ENCODE measurements at regions of chr15 and their contacts with region 1.

Region 1: DNA sequence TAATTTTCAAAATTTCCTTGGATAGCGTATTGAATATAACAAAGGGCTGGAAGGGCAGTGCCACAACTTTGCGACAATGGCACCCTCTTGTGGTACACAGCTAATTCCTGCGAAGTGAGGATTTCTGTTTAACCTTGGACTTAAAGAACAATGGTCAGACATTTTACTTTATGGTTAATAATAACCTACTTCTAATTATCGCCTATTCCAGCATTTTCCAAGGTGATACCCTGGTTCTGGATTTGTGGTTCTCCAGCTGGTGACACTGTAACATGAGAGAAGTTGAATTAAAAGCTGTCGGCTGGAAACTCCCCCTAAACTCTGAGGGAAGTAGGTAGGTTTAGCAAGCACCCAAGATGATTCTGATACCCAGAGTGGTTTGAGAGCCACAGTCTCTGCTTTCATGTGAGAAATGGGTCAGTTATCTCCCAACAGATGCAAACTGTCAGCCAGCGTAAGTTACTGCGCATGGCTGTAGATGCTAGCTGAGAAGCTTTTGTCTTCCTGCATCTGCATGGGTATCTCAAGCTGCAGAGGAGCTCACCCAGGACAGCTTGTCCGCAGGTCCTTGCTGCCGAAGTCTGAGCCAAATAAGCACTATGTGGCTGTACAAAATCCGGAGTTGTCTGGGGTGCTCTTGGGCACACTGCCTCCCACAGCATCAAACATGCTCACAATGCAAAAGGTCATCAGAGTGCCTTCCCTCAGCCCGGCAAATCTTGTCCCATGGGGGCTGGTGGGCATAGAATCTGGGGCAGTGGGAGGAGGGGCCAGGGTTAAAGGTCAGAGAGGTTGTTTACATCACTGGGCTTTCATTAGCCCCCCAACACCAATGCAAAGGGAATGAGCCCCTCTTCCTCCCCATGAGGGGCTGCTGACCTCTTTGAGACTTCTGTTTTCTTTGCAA is 6.6 kb upstream of the CHSY1 start:
- DNase-seq: peak; percentile 45
- ATAC-seq: peak; percentile 62
- H3K4me3 Mint-ChIP-seq: no peak overlapping the region
- H3K27ac Mint-ChIP-seq: no peak overlapping the region
- H3K4me1 Mint-ChIP-seq: peaks cover 38% of the 10 kb centered on the region
- H3K27me3 Mint-ChIP-seq: no peaks in the 10 kb centered on the region
- CTCF ChIP-seq: peak; percentile 48

Region 2: GRCh38 chr15:101014921-101015841 is 243.3 kb before region 1 on chr15:
- CTCF ChIA-PET with region 1: interaction called, 128 read pairs
- POLR2A ChIA-PET with region 1: no interaction called
- DNase-seq: peak; percentile 87
- ATAC-seq: peak; percentile 81
- H3K4me3 Mint-ChIP-seq: no peak overlapping the region
- H3K27ac Mint-ChIP-seq: no peak overlapping the region
- H3K4me1 Mint-ChIP-seq: peaks cover 53% of the 10 kb centered on the region
- H3K27me3 Mint-ChIP-seq: no peaks in the 10 kb centered on the region; the same call in 1 of the 2 replicates
- CTCF ChIP-seq: peak; percentile 89

Region 3: GRCh38 chr15:101088788-101089583 is 169.5 kb before region 1 on chr15:
- CTCF ChIA-PET with region 1: interaction called, 20 read pairs
- POLR2A ChIA-PET with region 1: no interaction called
- DNase-seq: peak; percentile 80
- ATAC-seq: peak; percentile 89
- H3K4me3 Mint-ChIP-seq: no peak overlapping the region
- H3K27ac Mint-ChIP-seq: no peak overlapping the region
- H3K4me1 Mint-ChIP-seq: peaks cover 18% of the 10 kb centered on the region; the same call in 1 of the 2 replicates
- H3K27me3 Mint-ChIP-seq: no peaks in the 10 kb centered on the region
- CTCF ChIP-seq: peak; percentile 100

Region 4: GRCh38 chr15:101152914-101153313 is 105.6 kb before region 1 on chr15:
- CTCF ChIA-PET with region 1: interaction called, 11 read pairs
- POLR2A ChIA-PET with region 1: no interaction called
- DNase-seq: peak; percentile 62
- ATAC-seq: peak; percentile 92
- H3K4me3 Mint-ChIP-seq: no peak overlapping the region
- H3K27ac Mint-ChIP-seq: no peak overlapping the region
- H3K4me1 Mint-ChIP-seq: peaks cover 36% of the 10 kb centered on the region
- H3K27me3 Mint-ChIP-seq: no peaks in the 10 kb centered on the region
- CTCF ChIP-seq: peak; percentile 66

Region 5: GRCh38 chr15:101228313-101228712 is 30.2 kb before region 1 on chr15:
- CTCF ChIA-PET with region 1: no interaction called
- POLR2A ChIA-PET with region 1: no interaction called
- DNase-seq: no peak
- ATAC-seq: no peak
- H3K4me3 Mint-ChIP-seq: no peak overlapping the region
- H3K27ac Mint-ChIP-seq: peak overlapping the region; percentile 4; the same call in 1 of the 2 replicates
- H3K4me1 Mint-ChIP-seq: peaks cover 33% of the 10 kb centered on the region
- H3K27me3 Mint-ChIP-seq: no peaks in the 10 kb centered on the region
- CTCF ChIP-seq: no peak

Region 6: GRCh38 chr15:101269479-101270223 is 11.2 kb after region 1 on chr15:
- CTCF ChIA-PET with region 1: interaction called, 26 read pairs
- POLR2A ChIA-PET with region 1: no interaction called
- DNase-seq: no peak
- ATAC-seq: peak; percentile 74
- H3K4me3 Mint-ChIP-seq: no peak overlapping the region
- H3K27ac Mint-ChIP-seq: no peak overlapping the region
- H3K4me1 Mint-ChIP-seq: peaks cover 11% of the 10 kb centered on the region
- H3K27me3 Mint-ChIP-seq: no peaks in the 10 kb centered on the region
- CTCF ChIP-seq: no peak

Region 7: GRCh38 chr15:101307048-101307896 is 48.8 kb after region 1 on chr15:
- CTCF ChIA-PET with region 1: no interaction called
- POLR2A ChIA-PET with region 1: no interaction called
- DNase-seq: no peak
- ATAC-seq: no peak
- H3K4me3 Mint-ChIP-seq: no peak overlapping the region
- H3K27ac Mint-ChIP-seq: no peak overlapping the region
- H3K4me1 Mint-ChIP-seq: no peaks in the 10 kb centered on the region
- H3K27me3 Mint-ChIP-seq: no peaks in the 10 kb centered on the region
- CTCF ChIP-seq: no peak